B cell (primary cell): ENCODE measurements at regions of chr10 and their contacts with region 1.

Region 1: DNA sequence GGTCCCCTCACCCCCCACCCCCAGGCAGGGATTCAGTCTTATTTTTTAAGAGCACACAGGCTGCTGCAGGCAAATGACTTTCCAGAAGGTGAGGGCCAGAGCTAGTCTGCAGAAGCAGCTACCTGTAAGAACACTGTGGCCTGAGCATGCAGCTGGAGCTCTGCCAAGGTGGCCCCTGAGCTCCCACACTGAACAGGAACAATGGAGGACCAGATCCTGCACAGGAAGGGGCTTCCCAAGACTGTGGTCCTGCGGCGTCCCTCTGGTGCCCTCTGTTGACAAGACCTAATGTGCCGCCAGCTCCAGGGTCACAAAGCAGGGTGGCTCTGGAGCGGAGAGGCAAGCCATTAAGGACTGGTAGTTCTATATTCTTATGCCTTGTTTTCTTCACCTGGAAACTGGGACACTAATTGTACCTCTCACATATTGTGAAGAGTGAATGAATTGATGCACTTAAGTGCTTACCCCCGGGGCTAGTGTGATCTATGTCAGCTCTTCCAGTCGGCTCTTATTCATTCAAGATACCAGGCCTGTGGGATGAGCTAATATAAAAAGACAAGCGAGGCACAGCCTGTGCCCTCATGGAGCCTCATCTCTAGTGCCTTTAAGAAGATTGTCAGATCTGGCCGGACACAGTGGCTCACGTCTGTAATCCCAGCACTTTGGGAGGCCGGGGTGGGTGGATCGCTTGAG is 8.0 kb upstream of the BEND7 start:
- DNase-seq: peak; percentile 51
- ATAC-seq: no peak
- H3K4me3 ChIP-seq: no peak overlapping the region
- H3K4me3 Mint-ChIP-seq: no peak overlapping the region
- H3K27ac ChIP-seq: no peak overlapping the region
- H3K27ac Mint-ChIP-seq: no peak overlapping the region
- H3K4me1 ChIP-seq: no peaks in the 10 kb centered on the region
- H3K4me1 Mint-ChIP-seq: no peaks in the 10 kb centered on the region
- H3K27me3 ChIP-seq: peaks cover 0 to 20% (median 6%) of the 10 kb centered on the region in 4 experiments
- H3K27me3 Mint-ChIP-seq: peaks cover 58% of the 10 kb centered on the region
- CTCF ChIP-seq: peak; percentile 25

Region 2: DNA sequence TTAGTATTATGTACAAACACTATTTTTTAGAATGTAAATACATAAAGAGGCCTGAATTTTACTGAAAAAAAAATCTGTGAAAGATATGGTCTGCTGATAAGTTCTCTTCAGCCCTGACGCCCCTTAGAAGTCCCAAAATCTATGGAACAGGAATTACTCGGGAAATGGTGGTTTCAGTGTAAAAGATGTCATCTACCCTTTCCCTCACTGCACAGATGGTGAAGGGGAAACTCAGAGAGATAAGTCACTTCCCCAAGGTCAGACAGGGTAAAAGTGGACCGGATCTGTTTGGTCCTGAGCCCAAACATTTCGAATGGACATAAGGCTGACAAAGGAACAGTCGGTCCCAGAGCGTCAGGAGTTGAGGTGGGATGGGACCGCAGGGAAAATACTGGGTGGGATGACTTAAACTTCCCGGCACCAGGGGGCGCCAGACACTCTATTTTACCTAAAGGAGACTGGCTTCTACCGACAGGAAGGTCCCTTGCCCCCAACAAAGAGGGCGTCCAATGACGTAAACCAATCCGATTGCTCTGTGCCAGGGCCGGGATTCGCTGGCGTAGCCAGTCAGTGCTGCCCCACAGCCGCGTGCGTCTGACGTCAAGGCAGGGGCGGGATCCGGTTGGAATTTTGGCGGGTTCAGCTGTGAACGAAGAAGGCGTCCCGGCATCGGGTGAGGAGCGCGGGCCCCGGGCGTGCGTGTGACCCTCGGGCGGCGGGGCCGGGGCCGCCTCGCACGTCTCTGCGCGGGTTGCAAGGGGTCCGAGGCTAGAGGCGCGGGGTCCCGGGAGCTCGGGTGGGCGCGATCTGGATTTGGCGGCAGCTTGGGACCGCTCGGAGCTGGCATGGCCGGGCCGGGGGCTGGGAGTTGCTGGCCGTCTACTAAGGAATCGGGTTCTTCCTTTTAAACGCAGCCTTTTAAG is 375.6 kb before region 1 on chr10 and contains the start of gene MCM10:
- CTCF ChIA-PET with region 1: no interaction called
- POLR2A ChIA-PET with region 1: no interaction called
- intact Hi-C with region 1: loop called (anchors 5 kb)
- DNase-seq: peak; percentile 97
- ATAC-seq: peak; percentile 100
- H3K4me3 ChIP-seq: peak within 1 kb of the TSS; percentile 34 to 82 (median 63)
- H3K4me3 Mint-ChIP-seq: peak within 1 kb of the TSS; percentile 93
- H3K27ac ChIP-seq: peak within 1 kb of the TSS in 1 of 2 donors; percentile 54
- H3K27ac Mint-ChIP-seq: peak within 1 kb of the TSS; percentile 81
- H3K4me1 ChIP-seq: peaks cover 10 to 12% of the 10 kb centered on the region in 2 donors
- H3K4me1 Mint-ChIP-seq: peaks cover 14% of the 10 kb centered on the region
- H3K27me3 ChIP-seq: no peaks in the 10 kb centered on the region
- H3K27me3 Mint-ChIP-seq: no peaks in the 10 kb centered on the region
- CTCF ChIP-seq: peak; percentile 89
- total RNA-seq, gene MCM10: 0.15 and 0.42 TPM in 2 replicates

Region 3: DNA sequence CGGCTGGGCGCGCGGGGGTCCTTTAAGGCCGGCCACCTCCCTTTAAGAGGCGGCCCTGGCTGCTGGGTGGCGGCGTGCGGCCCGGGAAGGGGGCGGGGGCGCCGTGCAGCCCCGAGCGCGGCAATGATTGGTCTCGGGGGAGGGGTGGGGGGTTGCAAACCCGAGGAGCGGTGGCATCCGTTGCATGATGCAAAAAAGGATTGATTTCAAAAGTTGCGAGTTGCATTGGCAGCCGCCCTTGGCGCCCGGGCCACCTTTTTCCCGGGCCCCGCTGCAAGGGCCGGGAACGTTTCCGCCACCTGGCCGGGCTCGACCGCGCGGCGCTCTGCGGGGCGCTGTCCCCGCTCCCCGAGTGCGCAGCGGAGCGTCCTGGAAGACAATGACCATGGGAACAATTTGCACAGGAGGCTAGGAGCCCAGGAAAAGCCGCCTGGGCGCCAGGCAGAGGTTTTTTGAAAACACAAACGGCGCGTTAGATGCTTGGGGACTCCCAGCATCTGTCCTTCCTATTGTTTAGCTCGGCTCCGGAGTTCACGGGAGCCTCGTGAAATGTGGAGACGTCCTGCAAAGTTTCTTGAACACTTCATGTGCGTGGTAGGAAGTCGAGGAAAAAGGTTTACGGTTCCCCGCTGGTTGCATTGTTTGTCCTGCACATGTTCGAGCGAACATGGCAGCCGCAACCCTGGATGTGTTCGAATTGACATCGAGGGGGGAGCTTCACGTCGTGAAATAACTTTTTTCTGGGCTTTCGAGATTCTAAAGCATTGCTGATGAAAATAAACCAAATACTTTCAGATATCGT is 188.4 kb before region 1 on chr10 and contains the start of gene SEPHS1:
- CTCF ChIA-PET with region 1: no interaction called
- POLR2A ChIA-PET with region 1: no interaction called
- intact Hi-C with region 1: no loop called
- DNase-seq: peak; percentile 81
- ATAC-seq: peak; percentile 69
- H3K4me3 ChIP-seq: peak within 1 kb of the TSS; percentile 55 to 87 (median 82)
- H3K4me3 Mint-ChIP-seq: peak within 1 kb of the TSS; percentile 92
- H3K27ac ChIP-seq: peak within 1 kb of the TSS; percentile 54 to 82
- H3K27ac Mint-ChIP-seq: peak within 1 kb of the TSS; percentile 93
- H3K4me1 ChIP-seq: peaks cover 26 to 38% of the 10 kb centered on the region in 2 donors
- H3K4me1 Mint-ChIP-seq: peaks cover 58% of the 10 kb centered on the region
- H3K27me3 ChIP-seq: peaks cover 0 to 30% (median 7%) of the 10 kb centered on the region in 4 experiments
- H3K27me3 Mint-ChIP-seq: peaks cover 4% of the 10 kb centered on the region
- CTCF ChIP-seq: no peak
- total RNA-seq, gene SEPHS1: 25.3 and 29.1 TPM in 2 replicates

Region 4: DNA sequence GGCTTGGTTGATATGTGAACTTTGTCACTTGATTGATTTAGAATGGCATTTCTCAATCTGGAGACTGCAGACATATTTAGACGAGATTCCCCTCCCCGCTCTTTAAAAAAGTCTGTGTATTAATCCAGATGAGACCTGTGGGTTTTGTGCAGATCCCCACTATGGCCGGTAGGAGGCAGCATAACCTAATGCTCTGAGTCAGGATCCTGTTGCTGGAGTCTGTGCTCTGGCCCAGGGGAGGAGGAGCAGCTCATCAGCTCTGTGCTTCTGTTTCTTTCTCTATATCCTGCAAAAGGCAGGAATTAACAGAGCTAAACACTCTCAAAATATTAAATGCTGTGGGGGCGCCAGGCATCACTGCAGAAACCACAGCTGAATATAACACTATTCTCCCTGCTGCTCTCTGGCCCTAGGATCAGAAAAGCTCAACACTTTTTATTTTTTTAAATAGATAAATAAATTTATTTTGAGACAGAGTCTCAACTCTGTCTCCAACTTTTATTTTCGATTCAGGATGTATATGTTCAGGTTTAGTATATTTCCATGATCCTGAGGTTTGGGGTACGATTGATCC is 164.8 kb before region 1 on chr10:
- CTCF ChIA-PET with region 1: interaction called, 24 read pairs
- POLR2A ChIA-PET with region 1: no interaction called
- intact Hi-C with region 1: loop called (anchors 1 kb)
- DNase-seq: peak; percentile 84
- ATAC-seq: peak; percentile 96
- H3K4me3 ChIP-seq: no peak overlapping the region
- H3K4me3 Mint-ChIP-seq: no peak overlapping the region
- H3K27ac ChIP-seq: no peak overlapping the region
- H3K27ac Mint-ChIP-seq: no peak overlapping the region
- H3K4me1 ChIP-seq: no peaks in the 10 kb centered on the region
- H3K4me1 Mint-ChIP-seq: no peaks in the 10 kb centered on the region
- H3K27me3 ChIP-seq: no peaks in the 10 kb centered on the region
- H3K27me3 Mint-ChIP-seq: peaks cover 4% of the 10 kb centered on the region
- CTCF ChIP-seq: peak; percentile 95

Region 5: DNA sequence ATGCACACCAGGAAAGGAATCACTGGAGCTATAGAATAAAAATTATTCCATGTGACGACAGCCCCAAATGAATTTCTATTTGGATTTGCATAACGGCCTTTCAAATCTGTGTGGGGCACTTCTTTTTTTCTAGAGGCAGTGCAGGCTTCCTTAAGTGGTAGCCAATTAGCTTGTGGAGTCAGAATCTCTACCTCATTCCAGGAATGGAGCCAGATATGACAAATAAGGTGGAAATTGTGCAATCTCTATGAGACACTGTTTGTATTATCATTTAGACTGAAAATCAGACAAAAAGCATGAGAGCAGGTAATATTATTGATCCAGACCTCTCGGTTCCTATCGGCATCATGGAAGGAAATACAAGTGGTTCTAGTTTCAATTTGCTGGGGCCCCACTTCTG is 86.8 kb before region 1 on chr10:
- CTCF ChIA-PET with region 1: no interaction called
- POLR2A ChIA-PET with region 1: interaction called, 10 read pairs
- intact Hi-C with region 1: no loop called
- DNase-seq: no peak
- ATAC-seq: no peak
- H3K4me3 ChIP-seq: no peak overlapping the region
- H3K4me3 Mint-ChIP-seq: no peak overlapping the region
- H3K27ac ChIP-seq: no peak overlapping the region
- H3K27ac Mint-ChIP-seq: no peak overlapping the region
- H3K4me1 ChIP-seq: peaks cover 4 to 9% of the 10 kb centered on the region in 2 donors
- H3K4me1 Mint-ChIP-seq: peaks cover 4% of the 10 kb centered on the region
- H3K27me3 ChIP-seq: no peaks in the 10 kb centered on the region
- H3K27me3 Mint-ChIP-seq: peaks cover 26% of the 10 kb centered on the region
- CTCF ChIP-seq: no peak

Region 6: DNA sequence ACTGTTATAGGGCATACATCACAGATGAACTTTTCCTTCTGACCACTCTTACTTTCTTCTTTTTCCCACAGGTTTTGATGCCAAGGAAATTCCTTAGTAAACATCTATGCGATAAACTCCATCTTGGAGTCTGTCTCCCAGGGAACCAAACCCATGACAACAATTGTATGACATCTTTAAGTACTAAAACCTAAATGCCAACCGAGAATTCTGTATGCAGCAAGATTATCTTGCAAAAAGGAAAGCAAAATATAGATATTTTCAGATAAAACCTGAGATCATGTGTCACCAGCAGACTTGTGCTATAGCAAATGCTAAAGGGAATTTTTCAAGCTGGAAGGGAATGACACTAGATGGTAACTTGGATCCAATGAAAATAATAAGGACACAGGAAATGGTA is 14.0 kb after region 1 on chr10:
- CTCF ChIA-PET with region 1: no interaction called
- POLR2A ChIA-PET with region 1: no interaction called
- intact Hi-C with region 1: no loop called
- DNase-seq: no peak
- ATAC-seq: no peak
- H3K4me3 ChIP-seq: no peak overlapping the region
- H3K4me3 Mint-ChIP-seq: no peak overlapping the region
- H3K27ac ChIP-seq: no peak overlapping the region
- H3K27ac Mint-ChIP-seq: no peak overlapping the region
- H3K4me1 ChIP-seq: no peaks in the 10 kb centered on the region
- H3K4me1 Mint-ChIP-seq: no peaks in the 10 kb centered on the region
- H3K27me3 ChIP-seq: peaks cover 0 to 6% (median 3%) of the 10 kb centered on the region in 4 experiments
- H3K27me3 Mint-ChIP-seq: peaks cover 43% of the 10 kb centered on the region
- CTCF ChIP-seq: no peak